ENCODE measurements at regions of chr1 and their contacts with region 1.

Region 1: GRCh38 chr1:203871107-203871875 is 9.9 kb downstream of the SNRPE start:
- DNase-seq: peak in 4 of 5 donors; percentile 55 to 88 (median 67)
- H3K4me3 ChIP-seq: no peak overlapping the region
- H3K27ac ChIP-seq: peak overlapping the region in 1 of 2 donors; percentile 13
- H3K4me1 ChIP-seq: peaks cover 0 to 9% (median 6%) of the 10 kb centered on the region in 3 donors
- H3K27me3 ChIP-seq: no peaks in the 10 kb centered on the region
- CTCF ChIP-seq: peak; percentile 95

Region 2: GRCh38 chr1:203781953-203782352 is 89.3 kb before region 1 on chr1:
- intact Hi-C with region 1: no loop called
- DNase-seq: no peak
- H3K4me3 ChIP-seq: no peak overlapping the region
- H3K27ac ChIP-seq: no peak overlapping the region
- H3K4me1 ChIP-seq: no peaks in the 10 kb centered on the region
- H3K27me3 ChIP-seq: no peaks in the 10 kb centered on the region
- CTCF ChIP-seq: no peak

Region 3: DNA sequence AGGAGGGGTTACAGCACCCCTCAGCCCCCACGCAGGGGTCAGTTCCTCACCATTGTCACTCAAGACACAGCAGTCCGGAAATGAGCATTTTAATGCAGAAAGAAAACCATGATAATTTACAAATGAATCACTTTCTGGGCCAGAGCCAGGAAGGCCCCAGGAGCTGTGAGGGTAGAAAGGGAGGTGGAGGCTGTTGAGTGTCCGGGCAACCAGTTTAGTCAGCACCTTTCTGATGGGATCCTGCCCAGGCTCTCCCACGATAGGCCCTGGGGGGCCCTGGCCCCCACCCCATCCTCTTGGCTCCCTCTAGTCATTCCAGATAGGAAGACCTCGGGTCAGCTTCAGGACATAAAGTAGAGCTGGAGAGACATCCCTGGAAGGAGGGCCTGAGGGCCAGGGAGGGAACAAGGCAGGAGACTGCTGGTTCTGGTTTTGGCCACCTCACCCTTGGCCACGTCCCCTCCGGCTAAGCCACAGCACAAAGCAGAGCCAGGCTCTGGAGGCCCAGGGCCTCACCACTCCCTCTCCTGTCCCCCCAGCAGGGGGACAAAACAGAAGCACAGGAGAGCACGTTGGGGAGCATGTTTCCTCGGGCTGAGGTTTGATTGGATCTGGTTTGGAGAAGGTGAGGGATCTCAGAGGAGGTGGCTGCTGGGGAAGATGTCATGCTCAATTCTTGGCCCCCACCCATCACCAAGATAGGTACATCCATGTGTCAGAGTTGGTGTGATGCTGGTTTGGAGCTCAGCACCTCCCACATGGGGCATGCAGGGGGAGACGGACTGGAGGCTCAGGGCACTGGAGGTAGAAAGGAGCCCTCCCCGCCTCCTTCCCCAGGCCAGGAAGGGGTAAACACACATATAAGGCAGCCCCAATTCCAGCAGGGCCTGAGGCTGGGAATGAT is 259.9 kb after region 1 on chr1:
- intact Hi-C with region 1: loop called (anchors 5 kb)
- DNase-seq: no peak
- H3K4me3 ChIP-seq: peak overlapping the region in 1 of 3 donors; percentile 8
- H3K27ac ChIP-seq: peak overlapping the region; percentile 94 to 96
- H3K4me1 ChIP-seq: peaks cover 0 to 49% (median 45%) of the 10 kb centered on the region in 3 donors
- H3K27me3 ChIP-seq: no peaks in the 10 kb centered on the region
- CTCF ChIP-seq: no peak

Measured in kidney (tissue), 22 donors.